ENCODE measurements at regions of chr5 and their contacts with region 1.

Region 1: DNA sequence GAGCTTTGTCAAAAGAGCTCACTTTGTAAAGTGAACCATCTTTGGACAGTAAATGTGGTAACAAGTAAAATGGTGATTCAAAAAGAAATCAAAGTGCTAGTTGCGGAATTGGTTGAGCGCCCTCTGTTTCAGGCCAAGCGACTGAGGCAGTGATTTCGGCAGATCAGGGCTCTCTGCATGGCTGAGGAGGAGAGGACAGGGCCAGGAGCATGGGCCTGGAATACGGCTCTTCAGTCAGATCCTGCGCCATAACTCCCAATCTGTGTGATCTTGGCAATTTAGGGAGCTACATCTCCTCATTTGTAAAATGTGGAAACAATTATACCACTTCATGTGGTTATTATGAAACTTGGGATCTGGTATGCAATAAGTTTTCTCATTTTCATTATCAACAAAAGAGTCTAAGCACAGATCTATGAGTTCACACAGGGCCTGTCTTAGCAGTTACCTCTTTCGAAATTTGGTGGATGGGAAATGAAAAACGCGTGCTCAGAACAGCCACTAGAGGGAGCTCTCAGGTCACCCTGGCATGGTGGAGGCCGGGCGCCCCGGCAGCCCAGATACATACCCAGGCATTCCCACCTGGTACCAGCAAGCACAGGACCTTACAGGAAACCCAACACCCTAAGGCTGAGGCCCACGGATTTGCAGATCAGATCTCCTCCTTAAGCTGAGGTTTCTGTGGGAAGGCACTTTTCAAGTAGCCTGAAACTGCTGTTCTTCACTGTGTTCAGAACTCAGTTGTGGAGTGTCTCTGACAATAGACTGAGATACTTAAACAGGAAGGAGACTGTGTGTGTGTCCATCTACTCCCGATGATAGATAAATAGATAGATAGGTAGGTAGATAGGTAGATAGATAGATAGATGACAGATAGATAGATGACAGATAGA is 303.7 kb downstream of the RAB3C start:
- DNase-seq: peak; percentile 68
- ATAC-seq: peak; percentile 75
- H3K4me3 Mint-ChIP-seq: no peak overlapping the region
- H3K27ac Mint-ChIP-seq: no peak overlapping the region
- H3K4me1 Mint-ChIP-seq: peaks cover 20% of the 10 kb centered on the region
- H3K27me3 Mint-ChIP-seq: peaks cover 5% of the 10 kb centered on the region
- CTCF ChIP-seq: peak; percentile 92

Region 2: DNA sequence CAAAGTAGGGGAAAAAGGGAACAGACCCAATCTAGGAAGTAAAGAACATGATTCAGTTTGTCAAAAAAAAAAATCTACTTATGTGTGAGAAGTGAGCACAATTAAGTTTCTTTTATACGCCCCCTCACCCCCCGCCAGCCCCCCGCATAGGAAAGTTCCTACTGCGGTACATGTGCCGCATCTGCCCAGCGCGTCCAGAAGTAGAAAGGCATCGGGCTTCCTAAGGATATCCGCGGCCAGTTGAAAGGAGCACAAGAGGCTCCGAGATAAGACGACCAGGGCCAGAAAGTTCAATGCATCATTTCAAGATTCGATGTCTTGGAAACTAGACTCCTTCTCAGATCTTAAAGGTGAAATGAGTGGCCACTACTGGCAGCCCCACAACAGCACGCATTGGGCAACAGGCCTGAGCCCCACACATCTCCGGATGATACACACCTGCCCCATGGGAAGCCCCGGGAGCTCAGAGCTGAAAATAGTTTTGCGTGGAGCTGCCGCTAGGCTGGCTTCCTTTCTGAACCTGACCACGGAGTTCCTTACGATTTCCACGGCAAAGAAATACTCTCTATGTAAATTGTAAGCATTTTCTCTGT is 99.8 kb before region 1 on chr5:
- CTCF ChIA-PET with region 1: no interaction called
- POLR2A ChIA-PET with region 1: no interaction called
- intact Hi-C with region 1: no loop called
- DNase-seq: no peak
- ATAC-seq: no peak
- H3K4me3 Mint-ChIP-seq: no peak overlapping the region
- H3K27ac Mint-ChIP-seq: no peak overlapping the region
- H3K4me1 Mint-ChIP-seq: peaks cover 2% of the 10 kb centered on the region
- H3K27me3 Mint-ChIP-seq: peaks cover 15% of the 10 kb centered on the region
- CTCF ChIP-seq: no peak

Region 3: GRCh38 chr5:58838732-58839131 is 47.8 kb before region 1 on chr5:
- CTCF ChIA-PET with region 1: no interaction called
- POLR2A ChIA-PET with region 1: no interaction called
- intact Hi-C with region 1: no loop called
- DNase-seq: no peak
- ATAC-seq: no peak
- H3K4me3 Mint-ChIP-seq: no peak overlapping the region
- H3K27ac Mint-ChIP-seq: no peak overlapping the region
- H3K4me1 Mint-ChIP-seq: no peaks in the 10 kb centered on the region
- H3K27me3 Mint-ChIP-seq: no peaks in the 10 kb centered on the region
- CTCF ChIP-seq: no peak

Region 4: GRCh38 chr5:58849921-58850667 is 36.5 kb before region 1 on chr5:
- CTCF ChIA-PET with region 1: interaction called, 10 read pairs
- POLR2A ChIA-PET with region 1: no interaction called
- intact Hi-C with region 1: no loop called
- DNase-seq: no peak
- ATAC-seq: peak; percentile 55
- H3K4me3 Mint-ChIP-seq: no peak overlapping the region
- H3K27ac Mint-ChIP-seq: no peak overlapping the region
- H3K4me1 Mint-ChIP-seq: no peaks in the 10 kb centered on the region
- H3K27me3 Mint-ChIP-seq: peaks cover 3% of the 10 kb centered on the region
- CTCF ChIP-seq: peak; percentile 55

Region 5: GRCh38 chr5:58898538-58898937 is 12.0 kb after region 1 on chr5:
- CTCF ChIA-PET with region 1: interaction called, 37 read pairs
- POLR2A ChIA-PET with region 1: no interaction called
- intact Hi-C with region 1: no loop called
- DNase-seq: no peak
- ATAC-seq: no peak
- H3K4me3 Mint-ChIP-seq: no peak overlapping the region
- H3K27ac Mint-ChIP-seq: no peak overlapping the region
- H3K4me1 Mint-ChIP-seq: no peaks in the 10 kb centered on the region
- H3K27me3 Mint-ChIP-seq: no peaks in the 10 kb centered on the region
- CTCF ChIP-seq: no peak

Region 6: DNA sequence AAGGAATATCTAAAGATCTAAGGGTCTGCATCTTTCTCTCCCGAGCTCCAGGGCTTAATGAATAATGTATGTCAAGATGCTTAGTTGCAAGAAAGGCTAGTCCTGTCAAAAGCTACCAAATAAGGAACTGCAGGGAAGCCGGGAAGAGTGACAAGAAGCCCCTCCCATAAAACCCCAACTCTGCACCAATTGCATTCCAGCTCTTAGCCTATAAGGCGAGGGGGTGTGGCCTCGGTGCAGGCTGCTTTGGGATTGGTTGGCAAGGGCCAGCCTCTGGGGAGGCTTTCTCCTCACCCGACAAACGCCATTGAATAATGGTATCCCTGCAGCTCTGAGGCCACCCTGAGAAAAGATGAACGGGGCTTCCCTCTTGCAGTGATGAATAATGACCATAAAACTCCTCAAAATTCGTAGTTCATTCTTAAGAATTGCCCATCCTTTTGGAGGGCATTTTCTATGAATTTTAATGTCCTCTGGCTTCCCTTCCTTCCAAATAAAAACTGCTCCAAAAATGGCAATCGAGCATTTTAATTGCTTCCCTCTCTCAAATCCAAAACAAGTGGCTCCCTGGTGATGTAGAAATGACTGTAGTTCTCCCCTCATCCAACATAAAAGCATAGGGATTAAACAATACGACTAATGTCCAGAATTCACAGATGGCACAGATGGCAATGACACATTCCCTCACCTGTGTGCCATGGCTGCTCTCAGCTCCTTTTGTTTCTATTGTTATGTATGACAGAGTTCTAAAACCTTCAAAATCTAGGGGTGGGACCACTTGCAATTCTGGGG is 113.4 kb after region 1 on chr5:
- CTCF ChIA-PET with region 1: interaction called, 14 read pairs
- POLR2A ChIA-PET with region 1: no interaction called
- intact Hi-C with region 1: loop called (anchors 5 kb)
- DNase-seq: no peak
- ATAC-seq: no peak
- H3K4me3 Mint-ChIP-seq: no peak overlapping the region
- H3K27ac Mint-ChIP-seq: no peak overlapping the region
- H3K4me1 Mint-ChIP-seq: peaks cover 56% of the 10 kb centered on the region
- H3K27me3 Mint-ChIP-seq: no peaks in the 10 kb centered on the region
- CTCF ChIP-seq: no peak

Region 7: DNA sequence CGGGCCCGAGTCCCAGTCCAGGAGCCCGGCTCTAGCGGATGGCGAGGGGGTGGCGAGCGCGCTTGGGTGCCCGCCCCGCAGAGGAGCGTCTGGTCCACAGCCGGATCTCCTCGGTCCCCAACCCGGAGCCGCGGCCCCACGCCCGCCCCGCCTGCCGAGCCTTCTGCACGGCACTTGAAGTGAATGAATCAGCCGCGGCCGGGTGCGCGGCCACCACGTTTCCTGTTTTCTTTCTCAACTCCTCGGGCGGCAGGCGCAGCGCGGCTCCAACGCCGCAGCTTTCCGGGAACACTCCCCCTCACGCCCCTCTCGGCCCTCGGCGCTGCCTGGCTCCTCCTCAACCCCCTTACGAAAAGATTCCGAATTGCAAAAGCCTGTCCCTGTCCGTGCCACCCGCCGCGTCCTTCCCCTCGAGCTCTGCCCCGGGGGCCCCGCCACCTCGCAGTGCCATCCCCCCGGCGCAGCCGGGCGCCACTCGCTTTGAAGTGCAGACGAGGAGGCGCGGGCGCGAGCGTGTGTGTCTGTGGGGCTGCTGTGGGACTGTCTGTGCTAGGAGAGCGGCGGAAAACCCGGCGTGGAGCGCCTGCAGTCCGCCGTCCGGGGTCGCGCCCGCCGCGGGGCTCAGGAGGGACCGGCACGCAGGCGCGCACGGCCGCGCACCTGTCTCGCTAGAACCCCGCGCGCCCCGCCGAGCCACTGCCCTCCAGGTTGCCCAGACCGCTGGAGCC is 152.9 kb after region 1 on chr5:
- CTCF ChIA-PET with region 1: interaction called, 23 read pairs
- POLR2A ChIA-PET with region 1: no interaction called
- intact Hi-C with region 1: no loop called
- DNase-seq: peak; percentile 96
- ATAC-seq: peak; percentile 74
- H3K4me3 Mint-ChIP-seq: peak overlapping the region; percentile 89
- H3K27ac Mint-ChIP-seq: peak overlapping the region; percentile 85
- H3K4me1 Mint-ChIP-seq: peaks cover 38% of the 10 kb centered on the region
- H3K27me3 Mint-ChIP-seq: no peaks in the 10 kb centered on the region
- CTCF ChIP-seq: no peak

Region 8: DNA sequence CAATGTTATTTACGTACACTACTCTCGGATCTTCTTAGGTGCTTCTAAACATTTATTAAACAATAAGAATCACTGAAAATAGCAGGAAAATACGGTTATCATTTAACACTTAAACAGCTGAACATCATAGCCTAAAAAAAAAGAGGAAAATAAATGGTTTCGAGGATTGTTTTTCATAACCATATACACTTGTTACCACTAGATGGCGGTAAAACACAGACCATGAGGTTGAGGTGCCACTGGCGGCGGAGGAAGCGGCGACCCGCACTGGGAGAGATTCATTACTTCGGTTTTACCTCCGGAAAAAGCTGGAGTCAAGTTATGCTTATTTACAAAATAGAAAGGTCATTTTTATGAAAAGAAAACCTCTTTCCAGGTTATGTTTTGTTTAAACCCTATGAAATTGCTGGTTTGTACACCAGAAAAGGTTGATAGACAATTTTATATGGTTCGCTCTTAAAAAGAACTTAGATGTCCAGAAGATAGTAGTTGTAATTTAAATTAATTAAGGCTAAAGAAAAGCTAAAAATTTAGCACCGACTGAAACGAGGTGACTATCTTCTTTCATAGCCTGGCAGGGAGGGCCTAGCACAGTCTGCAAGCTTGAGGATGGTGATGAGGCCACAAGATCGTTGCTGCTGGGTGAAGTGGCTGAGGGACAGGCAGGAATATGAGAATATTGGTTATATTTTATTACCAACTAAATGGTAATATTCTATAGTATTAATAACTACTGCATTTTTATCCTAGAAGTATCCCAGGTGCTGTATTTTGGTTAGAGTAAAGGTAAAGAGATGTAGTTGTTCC is 302.1 kb after region 1 on chr5:
- CTCF ChIA-PET with region 1: interaction called, 17 read pairs
- POLR2A ChIA-PET with region 1: interaction called, 3 read pairs
- intact Hi-C with region 1: no loop called
- DNase-seq: peak; percentile 73
- ATAC-seq: peak; percentile 75
- H3K4me3 Mint-ChIP-seq: no peak overlapping the region
- H3K27ac Mint-ChIP-seq: no peak overlapping the region
- H3K4me1 Mint-ChIP-seq: peaks cover 3% of the 10 kb centered on the region
- H3K27me3 Mint-ChIP-seq: peaks cover 10% of the 10 kb centered on the region
- CTCF ChIP-seq: peak; percentile 90